ENCODE measurements at regions of chr12 and their contacts with region 1.

Region 1: GRCh38 chr12:64256166-64256800 is 34.2 kb upstream of the KICS2 start:
- DNase-seq: peak; percentile 62
- ATAC-seq: no peak
- H3K4me3 ChIP-seq: no peak overlapping the region
- H3K4me3 Mint-ChIP-seq: no peak overlapping the region
- H3K27ac ChIP-seq: no peak overlapping the region
- H3K27ac Mint-ChIP-seq: no peak overlapping the region
- H3K4me1 ChIP-seq: no peaks in the 10 kb centered on the region
- H3K4me1 Mint-ChIP-seq: no peaks in the 10 kb centered on the region
- H3K27me3 ChIP-seq: no peaks in the 10 kb centered on the region
- H3K27me3 Mint-ChIP-seq: no peaks in the 10 kb centered on the region
- CTCF ChIP-seq: peak; percentile 84

Region 2: GRCh38 chr12:63826006-63826585 is 430.2 kb before region 1 on chr12:
- CTCF ChIA-PET with region 1: interaction called, 15 read pairs
- POLR2A ChIA-PET with region 1: no interaction called
- intact Hi-C with region 1: loop called (anchors 1 kb)
- DNase-seq: peak; percentile 32
- ATAC-seq: no peak
- H3K4me3 ChIP-seq: no peak overlapping the region
- H3K4me3 Mint-ChIP-seq: no peak overlapping the region
- H3K27ac ChIP-seq: no peak overlapping the region
- H3K27ac Mint-ChIP-seq: no peak overlapping the region
- H3K4me1 ChIP-seq: no peaks in the 10 kb centered on the region
- H3K4me1 Mint-ChIP-seq: peaks cover 2% of the 10 kb centered on the region
- H3K27me3 ChIP-seq: no peaks in the 10 kb centered on the region
- H3K27me3 Mint-ChIP-seq: peaks cover 37% of the 10 kb centered on the region
- CTCF ChIP-seq: peak; percentile 72

Region 3: DNA sequence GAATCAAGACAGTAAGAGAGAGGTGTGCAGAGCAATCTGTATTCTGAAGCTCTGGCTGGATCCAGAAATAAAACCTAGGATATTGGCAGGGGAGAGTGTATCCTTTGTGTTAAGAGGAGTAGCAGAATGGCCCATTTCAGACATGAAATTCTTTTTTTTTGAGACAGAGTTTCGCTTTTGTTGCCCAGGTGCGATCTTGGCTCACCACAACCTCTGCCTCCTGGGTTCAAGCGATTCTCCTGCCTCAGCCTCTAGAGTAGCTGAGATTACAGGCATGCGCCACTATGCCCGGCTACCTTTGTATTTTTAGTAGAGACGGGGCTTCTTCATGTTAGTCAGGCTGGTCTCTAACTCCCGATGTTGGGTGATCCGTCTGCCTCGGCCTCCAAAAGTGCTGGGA is 417.9 kb before region 1 on chr12:
- CTCF ChIA-PET with region 1: interaction called, 18 read pairs
- POLR2A ChIA-PET with region 1: no interaction called
- intact Hi-C with region 1: loop called (anchors 1 kb)
- DNase-seq: no peak
- ATAC-seq: no peak
- H3K4me3 ChIP-seq: no peak overlapping the region
- H3K4me3 Mint-ChIP-seq: no peak overlapping the region
- H3K27ac ChIP-seq: no peak overlapping the region
- H3K27ac Mint-ChIP-seq: no peak overlapping the region
- H3K4me1 ChIP-seq: peaks cover 0 to 4% of the 10 kb centered on the region in 2 donors
- H3K4me1 Mint-ChIP-seq: peaks cover 4% of the 10 kb centered on the region
- H3K27me3 ChIP-seq: peaks cover 0 to 9% (median 4%) of the 10 kb centered on the region in 4 experiments
- H3K27me3 Mint-ChIP-seq: peaks cover 12% of the 10 kb centered on the region
- CTCF ChIP-seq: no peak

Measured in B cell (primary cell).